Activated CD4-positive, alpha-beta T cell treated with anti-CD3 and anti-CD28 coated beads for 36 hours (primary cell): ENCODE measurements at regions of chr9 and their contacts with region 1.

Region 1: DNA sequence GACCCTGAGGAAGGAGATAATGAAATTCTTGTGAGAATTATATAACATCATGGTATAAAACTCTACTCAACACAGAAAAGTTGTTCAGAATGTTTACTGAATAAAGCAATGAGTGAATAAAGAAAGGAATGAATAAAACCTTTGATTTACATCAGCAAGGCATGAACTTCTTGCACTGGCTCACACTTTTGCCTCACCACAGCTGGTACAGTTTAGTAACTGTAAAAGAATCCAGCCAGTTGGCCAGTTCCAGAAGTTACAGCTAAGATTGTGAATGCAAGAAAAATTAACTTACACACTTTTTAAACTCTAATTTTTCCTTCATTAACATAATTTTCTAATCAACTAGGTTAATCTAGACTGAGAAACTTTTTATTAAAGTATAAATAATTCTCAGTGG is 490.9 kb downstream of the NFIB start:
- DNase-seq: no peak
- ATAC-seq: no peak
- H3K4me3 Mint-ChIP-seq: no peak overlapping the region
- H3K27ac Mint-ChIP-seq: no peak overlapping the region
- H3K4me1 Mint-ChIP-seq: no peaks in the 10 kb centered on the region
- H3K27me3 Mint-ChIP-seq: no peaks in the 10 kb centered on the region

Region 2: DNA sequence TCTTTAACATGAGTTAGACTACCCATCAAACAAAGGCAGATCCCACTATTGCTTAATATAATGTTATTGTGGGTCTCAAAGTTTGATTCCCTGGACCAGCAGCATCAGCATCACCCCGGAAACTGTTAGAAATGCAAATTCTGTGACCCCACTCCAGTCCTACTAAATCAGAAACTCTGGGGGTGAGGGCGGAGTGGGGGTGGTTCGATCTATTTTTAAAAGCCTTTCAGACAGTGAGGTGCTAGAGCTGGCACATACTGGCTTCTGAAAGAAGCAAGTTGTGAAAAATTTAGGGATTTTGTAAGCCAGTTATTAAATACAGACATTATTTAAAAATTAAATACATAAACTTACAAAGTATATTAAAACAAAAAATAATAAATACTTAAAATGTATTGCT is 22.2 kb before region 1 on chr9:
- CTCF ChIA-PET with region 1: no interaction called
- POLR2A ChIA-PET with region 1: no interaction called
- intact Hi-C with region 1: loop called in 1 of 2 experiments (anchors 2 kb)
- DNase-seq: no peak
- ATAC-seq: no peak
- H3K4me3 Mint-ChIP-seq: no peak overlapping the region
- H3K27ac Mint-ChIP-seq: no peak overlapping the region
- H3K4me1 Mint-ChIP-seq: no peaks in the 10 kb centered on the region
- H3K27me3 Mint-ChIP-seq: no peaks in the 10 kb centered on the region